CD8-positive, alpha-beta T cell (primary cell): ENCODE measurements at regions of chr1 and their contacts with region 1.

Region 1: DNA sequence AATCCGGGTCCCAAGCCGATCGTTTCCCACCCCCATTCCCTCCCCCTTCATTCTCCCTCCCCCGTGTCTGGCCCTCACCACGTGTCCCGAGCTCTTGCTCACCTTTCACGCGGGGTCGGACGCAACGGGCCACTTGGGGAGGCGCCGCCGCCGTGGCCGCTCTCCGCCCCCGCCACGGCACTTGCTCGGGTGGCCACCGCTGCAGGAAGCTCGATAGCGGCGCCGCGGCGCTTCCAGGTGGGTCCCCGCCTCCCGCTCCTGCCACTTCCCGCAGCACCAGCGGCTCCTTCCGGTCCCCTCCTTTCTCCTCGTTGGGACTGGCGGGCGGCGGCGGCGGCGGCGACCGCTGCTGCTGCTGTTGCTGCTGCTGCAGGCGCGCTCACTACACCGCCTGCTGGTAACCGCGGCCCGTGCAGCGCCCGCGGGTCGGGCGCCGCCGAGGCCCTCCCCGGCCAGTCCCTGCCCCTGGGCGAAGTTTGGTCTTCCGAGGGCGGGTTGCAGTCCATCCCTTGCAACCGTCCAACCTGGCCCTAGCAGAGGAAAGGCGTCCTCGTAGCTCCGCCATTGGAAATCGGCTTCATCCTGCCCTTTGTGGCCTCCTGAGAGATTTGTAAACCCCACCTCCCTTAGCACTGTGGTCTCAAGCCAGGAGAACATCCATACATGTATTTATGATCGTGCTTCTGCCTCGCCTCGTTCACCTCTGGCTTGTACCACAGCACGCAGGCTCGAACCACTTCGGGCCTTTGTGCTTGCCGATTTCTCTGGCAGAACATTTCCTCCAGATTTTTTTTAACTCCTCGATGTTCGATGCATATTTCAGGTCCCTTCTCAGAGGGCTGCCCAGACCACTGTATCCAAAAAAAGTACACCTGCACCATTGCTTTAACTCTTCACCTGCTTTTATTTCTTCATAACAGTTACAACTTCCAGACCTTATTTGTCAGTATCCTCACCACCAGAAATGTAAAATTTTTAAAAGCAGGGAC is 996 bp upstream of the ZZZ3 start:
- DNase-seq: peak; percentile 81 to 95 (median 91)
- ATAC-seq: peak; percentile 71
- H3K4me3 ChIP-seq: peak overlapping the region; percentile 82 to 87
- H3K4me3 Mint-ChIP-seq: peak overlapping the region; percentile 91
- H3K27ac ChIP-seq: peak overlapping the region; percentile 89 to 99
- H3K27ac Mint-ChIP-seq: peak overlapping the region; percentile 97
- H3K4me1 ChIP-seq: peaks cover 39% of the 10 kb centered on the region
- H3K4me1 Mint-ChIP-seq: peaks cover 39% of the 10 kb centered on the region
- H3K27me3 ChIP-seq: no peaks in the 10 kb centered on the region
- H3K27me3 Mint-ChIP-seq: no peaks in the 10 kb centered on the region
- CTCF ChIP-seq: peak; percentile 90

Region 2: DNA sequence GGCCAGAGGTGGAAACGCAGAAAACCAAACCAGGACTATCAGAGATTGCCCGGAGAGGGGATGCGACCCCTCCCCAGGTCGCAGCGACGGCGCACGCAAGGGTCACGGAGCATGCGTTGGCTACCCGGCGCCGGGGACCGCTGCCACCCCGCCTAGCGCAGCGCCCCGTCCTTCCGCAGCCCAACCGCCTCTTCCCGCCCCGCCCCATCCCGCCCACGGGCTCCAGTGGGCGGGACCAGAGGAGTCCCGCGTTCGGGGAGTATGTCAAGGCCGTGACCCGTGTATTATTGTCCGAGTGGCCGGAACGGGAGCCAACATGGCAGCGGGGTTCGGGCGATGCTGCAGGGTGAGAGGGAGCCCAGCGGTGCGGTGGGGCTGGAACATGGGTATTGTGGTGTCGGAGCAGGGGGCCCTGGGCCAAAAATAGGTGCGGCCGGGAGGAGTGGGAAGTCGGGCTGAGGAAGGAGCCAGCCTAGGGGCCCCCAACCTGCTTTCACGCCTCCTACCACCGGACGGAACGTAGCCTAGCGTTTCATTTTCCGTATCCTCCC is 1958.9 kb before region 1 on chr1 and contains the start of gene ACADM:
- CTCF ChIA-PET with region 1: no interaction called
- POLR2A ChIA-PET with region 1: no interaction called
- intact Hi-C with region 1: loop called (anchors 5 to 10 kb)
- DNase-seq: peak; percentile 58 to 90 (median 79)
- ATAC-seq: peak; percentile 96
- H3K4me3 ChIP-seq: peak within 1 kb of the TSS; percentile 98
- H3K4me3 Mint-ChIP-seq: peak within 1 kb of the TSS; percentile 98
- H3K27ac ChIP-seq: peak within 1 kb of the TSS; percentile 78 to 82
- H3K27ac Mint-ChIP-seq: peak within 1 kb of the TSS; percentile 97
- H3K4me1 ChIP-seq: peaks cover 34% of the 10 kb centered on the region
- H3K4me1 Mint-ChIP-seq: peaks cover 60% of the 10 kb centered on the region
- H3K27me3 ChIP-seq: no peaks in the 10 kb centered on the region
- H3K27me3 Mint-ChIP-seq: no peaks in the 10 kb centered on the region
- CTCF ChIP-seq: no peak
- total RNA-seq, gene ACADM: 5.8 to 6.0 TPM

Region 3: GRCh38 chr1:76074321-76075187 is 1608.9 kb before region 1 on chr1 and contains the start of gene ST6GALNAC3:
- CTCF ChIA-PET with region 1: no interaction called
- POLR2A ChIA-PET with region 1: no interaction called
- intact Hi-C with region 1: loop called (anchors 2 to 10 kb)
- DNase-seq: peak; percentile 54 to 86 (median 77)
- ATAC-seq: peak; percentile 95
- H3K4me3 ChIP-seq: peak within 1 kb of the TSS; percentile 74 to 79
- H3K4me3 Mint-ChIP-seq: peak within 1 kb of the TSS; percentile 87
- H3K27ac ChIP-seq: peak within 1 kb of the TSS; percentile 34 to 56
- H3K27ac Mint-ChIP-seq: peak within 1 kb of the TSS; percentile 83
- H3K4me1 ChIP-seq: peaks cover 15% of the 10 kb centered on the region
- H3K4me1 Mint-ChIP-seq: peaks cover 29% of the 10 kb centered on the region
- H3K27me3 ChIP-seq: no peaks in the 10 kb centered on the region
- H3K27me3 Mint-ChIP-seq: peaks cover 5% of the 10 kb centered on the region
- CTCF ChIP-seq: no peak
- total RNA-seq, gene ST6GALNAC3: 1.4 to 2.3 TPM

Region 4: GRCh38 chr1:77219166-77219887 is 464.1 kb before region 1 on chr1 and contains the start of gene PIGK:
- CTCF ChIA-PET with region 1: no interaction called
- POLR2A ChIA-PET with region 1: no interaction called
- intact Hi-C with region 1: loop called (anchors 2 to 5 kb)
- DNase-seq: peak; percentile 71 to 92 (median 86)
- ATAC-seq: peak; percentile 97
- H3K4me3 ChIP-seq: peak within 1 kb of the TSS; percentile 96 to 97
- H3K4me3 Mint-ChIP-seq: peak within 1 kb of the TSS; percentile 96
- H3K27ac ChIP-seq: peak within 1 kb of the TSS; percentile 80 to 84
- H3K27ac Mint-ChIP-seq: peak within 1 kb of the TSS; percentile 97
- H3K4me1 ChIP-seq: peaks cover 25% of the 10 kb centered on the region
- H3K4me1 Mint-ChIP-seq: peaks cover 58% of the 10 kb centered on the region
- H3K27me3 ChIP-seq: no peaks in the 10 kb centered on the region
- H3K27me3 Mint-ChIP-seq: no peaks in the 10 kb centered on the region
- CTCF ChIP-seq: no peak
- total RNA-seq, gene PIGK: 4.5 to 7.1 TPM

Region 5: GRCh38 chr1:77582905-77583304 is 100.5 kb before region 1 on chr1:
- CTCF ChIA-PET with region 1: no interaction called
- POLR2A ChIA-PET with region 1: no interaction called
- intact Hi-C with region 1: loop called (anchors 5 kb)
- DNase-seq: no peak
- ATAC-seq: no peak
- H3K4me3 ChIP-seq: no peak overlapping the region
- H3K4me3 Mint-ChIP-seq: no peak overlapping the region
- H3K27ac ChIP-seq: no peak overlapping the region
- H3K27ac Mint-ChIP-seq: no peak overlapping the region
- H3K4me1 ChIP-seq: no peaks in the 10 kb centered on the region
- H3K4me1 Mint-ChIP-seq: peaks cover 8% of the 10 kb centered on the region
- H3K27me3 ChIP-seq: no peaks in the 10 kb centered on the region
- H3K27me3 Mint-ChIP-seq: no peaks in the 10 kb centered on the region
- CTCF ChIP-seq: no peak

Region 6: DNA sequence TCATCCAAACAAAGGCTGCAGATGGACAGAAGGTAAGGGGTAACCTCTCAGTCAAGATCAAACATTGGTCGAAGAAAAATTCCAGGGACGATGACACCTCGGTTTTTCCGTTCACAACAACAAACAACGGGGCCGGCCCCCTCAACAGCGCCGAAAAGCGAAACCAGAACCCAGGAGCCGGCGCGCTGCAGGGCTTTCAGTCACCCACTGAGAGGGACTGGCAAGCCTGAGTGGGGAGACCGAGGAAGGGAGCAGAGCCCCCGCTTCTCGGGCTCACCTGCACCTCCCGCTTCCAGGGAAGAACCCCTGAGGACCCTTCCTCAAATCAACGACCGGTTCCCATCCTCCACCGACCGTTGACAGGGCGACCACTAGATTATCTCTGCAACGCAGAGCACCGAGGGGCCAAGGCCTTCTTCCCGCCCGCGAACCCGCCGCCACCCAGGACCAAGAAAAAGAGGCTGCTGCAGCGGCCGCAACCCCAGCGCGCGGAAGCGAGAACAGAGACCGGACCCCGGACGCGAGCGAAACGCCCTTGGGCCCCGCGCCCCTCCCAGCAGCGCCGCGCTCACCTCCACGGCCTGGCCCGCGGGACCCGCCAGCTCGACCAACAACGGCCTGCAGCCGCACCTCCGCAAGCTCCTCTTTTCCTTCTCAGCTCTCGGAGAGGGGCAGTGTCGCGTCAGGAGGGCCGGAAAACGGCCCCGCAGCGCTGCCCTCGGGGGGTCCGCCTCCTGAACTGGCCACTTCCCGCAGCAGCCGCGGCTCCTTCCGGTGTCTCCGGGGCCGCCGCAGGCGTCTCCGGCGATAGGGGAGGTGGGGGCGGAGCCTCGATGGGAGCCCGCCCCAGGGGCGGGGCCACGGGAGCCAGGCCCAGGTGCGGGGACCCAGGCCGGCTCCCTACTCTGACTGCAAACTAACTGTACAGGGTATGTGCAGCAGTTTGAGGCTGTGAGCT is 75.9 kb after region 1 on chr1 and contains the start of gene USP33:
- CTCF ChIA-PET with region 1: no interaction called
- POLR2A ChIA-PET with region 1: interaction called, 4 read pairs
- intact Hi-C with region 1: loop called (anchors 1 kb)
- DNase-seq: peak; percentile 81 to 96 (median 89)
- ATAC-seq: peak; percentile 95
- H3K4me3 ChIP-seq: peak within 1 kb of the TSS; percentile 79 to 98
- H3K4me3 Mint-ChIP-seq: peak within 1 kb of the TSS; percentile 90
- H3K27ac ChIP-seq: peak within 1 kb of the TSS; percentile 70 to 88
- H3K27ac Mint-ChIP-seq: peak within 1 kb of the TSS; percentile 90
- H3K4me1 ChIP-seq: peaks cover 44% of the 10 kb centered on the region
- H3K4me1 Mint-ChIP-seq: peaks cover 45% of the 10 kb centered on the region
- H3K27me3 ChIP-seq: no peaks in the 10 kb centered on the region
- H3K27me3 Mint-ChIP-seq: no peaks in the 10 kb centered on the region
- CTCF ChIP-seq: no peak
- total RNA-seq, gene USP33: 72.1 to 72.2 TPM

Region 7: DNA sequence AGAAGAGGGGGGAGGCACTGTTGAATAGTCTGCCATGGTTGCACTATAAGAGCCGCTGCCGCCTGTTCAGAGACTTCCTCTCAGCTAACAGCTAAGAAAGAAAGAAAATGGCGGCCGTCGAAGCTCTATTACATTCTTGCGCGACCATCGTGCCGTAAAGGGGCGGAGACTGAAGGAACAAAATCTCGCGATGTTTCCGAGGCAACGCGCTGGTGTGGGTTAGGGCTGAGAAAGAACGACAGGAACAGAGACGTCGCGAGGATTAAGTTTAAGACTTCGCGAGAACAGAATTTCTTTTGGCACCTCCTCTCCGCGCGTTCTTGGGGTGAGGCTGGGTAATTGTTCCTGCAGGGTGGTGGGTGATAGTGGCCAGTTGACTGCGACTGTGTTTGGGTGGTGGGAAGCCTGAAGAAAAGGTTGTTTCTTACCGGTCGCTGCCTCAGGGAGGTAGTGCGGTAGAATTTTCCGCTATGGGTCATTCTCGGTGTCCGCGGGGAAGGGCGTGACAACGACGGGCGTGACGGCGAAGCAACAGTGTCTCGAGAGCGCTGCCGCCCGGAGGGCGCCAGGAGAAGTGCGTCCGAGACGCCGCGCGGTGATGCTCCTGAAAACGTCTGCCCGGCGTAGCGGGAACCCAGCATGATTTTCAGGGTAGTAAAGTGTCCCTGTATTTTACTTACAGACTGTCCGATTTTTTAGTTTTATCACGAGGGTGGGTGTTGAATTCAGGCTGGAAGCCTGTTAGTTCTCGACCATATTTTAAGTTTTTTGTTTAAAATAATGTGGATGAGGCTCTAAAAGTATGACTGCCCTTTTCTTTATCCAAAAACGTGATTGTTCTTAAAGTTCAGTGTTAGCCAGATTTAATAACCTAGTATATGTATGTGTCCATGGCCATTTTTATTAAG is 295.8 kb after region 1 on chr1 and contains the start of gene FUBP1:
- CTCF ChIA-PET with region 1: no interaction called
- POLR2A ChIA-PET with region 1: interaction called, 31 read pairs
- intact Hi-C with region 1: loop called (anchors 1 to 2 kb)
- DNase-seq: peak; percentile 91 to 99 (median 94)
- ATAC-seq: peak; percentile 75
- H3K4me3 ChIP-seq: peak within 1 kb of the TSS; percentile 88 to 99
- H3K4me3 Mint-ChIP-seq: no peak within 1 kb of the TSS
- H3K27ac ChIP-seq: peak within 1 kb of the TSS; percentile 98 to 100
- H3K27ac Mint-ChIP-seq: no peak within 1 kb of the TSS
- H3K4me1 ChIP-seq: peaks cover 45% of the 10 kb centered on the region
- H3K4me1 Mint-ChIP-seq: peaks cover 45% of the 10 kb centered on the region
- H3K27me3 ChIP-seq: no peaks in the 10 kb centered on the region
- H3K27me3 Mint-ChIP-seq: no peaks in the 10 kb centered on the region
- CTCF ChIP-seq: peak; percentile 75
- total RNA-seq, gene FUBP1: 212 to 217 TPM